ENCODE measurements at regions of chr11 and their contacts with region 1.

Region 1: GRCh38 chr11:72430741-72431570 is 3.4 kb downstream of the CLPB start:
- H3K4me3 ChIP-seq: no peak overlapping the region
- H3K27ac ChIP-seq: no peak overlapping the region
- H3K4me1 ChIP-seq: no peaks in the 10 kb centered on the region
- CTCF ChIP-seq: peak; percentile 67; the same call in 1 of the 2 replicates

Region 2: DNA sequence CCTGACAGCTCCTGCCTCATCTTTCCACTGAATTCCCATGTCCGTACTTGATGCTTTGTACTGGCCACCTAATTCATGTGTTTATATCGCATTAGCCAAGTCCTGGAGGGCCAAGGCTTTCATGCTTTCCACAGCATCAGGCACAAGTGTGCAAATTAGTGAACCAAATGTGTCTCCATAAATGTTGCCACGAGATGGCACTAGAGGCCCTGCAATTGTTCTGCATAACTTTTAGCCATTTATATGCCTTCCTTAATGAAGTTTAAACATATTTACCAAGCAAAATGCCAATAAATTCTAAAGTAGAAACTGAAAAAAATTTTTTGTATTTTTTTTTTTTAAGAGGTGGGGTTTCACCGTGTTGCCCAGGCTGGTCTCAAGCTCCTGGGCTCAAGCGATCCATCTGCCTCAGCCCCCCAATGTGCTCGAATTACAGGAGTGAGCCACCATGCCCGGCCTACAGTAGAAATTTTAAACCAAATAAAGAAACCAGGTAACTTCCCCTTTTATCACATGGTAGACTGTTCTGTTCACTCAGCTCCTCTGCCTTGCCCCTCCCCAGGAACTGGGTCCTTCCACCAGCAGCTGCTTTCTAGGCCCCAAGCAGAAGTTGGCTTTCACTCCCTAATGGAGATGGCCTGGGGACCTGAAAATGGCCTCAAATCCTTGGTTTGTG is 453.1 kb before region 1 on chr11:
- CTCF ChIA-PET with region 1: interaction called, 31 read pairs
- POLR2A ChIA-PET with region 1: no interaction called
- H3K4me3 ChIP-seq: no peak overlapping the region
- H3K27ac ChIP-seq: no peak overlapping the region
- H3K4me1 ChIP-seq: no peaks in the 10 kb centered on the region
- CTCF ChIP-seq: 0 out of 2 replicates have a peak, but pooled peaks have one; percentile 33

Region 3: GRCh38 chr11:72091005-72091691 is 339.8 kb before region 1 on chr11:
- CTCF ChIA-PET with region 1: interaction called, 15 read pairs
- POLR2A ChIA-PET with region 1: no interaction called
- H3K4me3 ChIP-seq: no peak overlapping the region
- H3K27ac ChIP-seq: no peak overlapping the region
- H3K4me1 ChIP-seq: no peaks in the 10 kb centered on the region
- CTCF ChIP-seq: peak; percentile 85

Region 4: DNA sequence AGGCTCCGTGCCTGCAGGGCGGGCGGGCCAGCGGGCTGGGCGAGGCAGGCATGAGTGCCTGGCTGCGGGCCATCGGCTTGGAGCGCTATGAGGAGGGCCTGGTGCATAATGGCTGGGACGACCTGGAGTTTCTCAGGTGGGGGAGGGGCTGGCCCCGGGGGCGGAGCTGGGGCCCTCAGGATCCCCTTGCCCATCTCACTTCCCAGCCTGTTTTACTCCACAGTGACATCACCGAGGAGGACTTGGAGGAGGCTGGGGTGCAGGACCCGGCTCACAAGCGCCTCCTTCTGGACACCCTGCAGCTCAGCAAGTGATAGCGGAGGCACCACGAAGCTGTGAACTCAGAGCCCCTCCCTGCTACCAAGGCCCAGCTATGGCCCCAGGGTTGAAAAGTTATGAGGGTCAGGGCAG is 192.9 kb before region 1 on chr11:
- CTCF ChIA-PET with region 1: interaction called, 19 read pairs
- POLR2A ChIA-PET with region 1: interaction called, 3 read pairs
- H3K4me3 ChIP-seq: no peak overlapping the region
- H3K27ac ChIP-seq: no peak overlapping the region
- H3K4me1 ChIP-seq: no peaks in the 10 kb centered on the region
- CTCF ChIP-seq: peak; percentile 30; the same call in 1 of the 2 replicates

Region 5: GRCh38 chr11:72308226-72309073 is 122.5 kb before region 1 on chr11:
- CTCF ChIA-PET with region 1: interaction called, 10 read pairs
- POLR2A ChIA-PET with region 1: no interaction called
- H3K4me3 ChIP-seq: no peak overlapping the region
- H3K27ac ChIP-seq: peak overlapping the region; percentile 32; the same call in 1 of the 2 replicates
- H3K4me1 ChIP-seq: peaks cover 11% of the 10 kb centered on the region
- CTCF ChIP-seq: no peak

Region 6: DNA sequence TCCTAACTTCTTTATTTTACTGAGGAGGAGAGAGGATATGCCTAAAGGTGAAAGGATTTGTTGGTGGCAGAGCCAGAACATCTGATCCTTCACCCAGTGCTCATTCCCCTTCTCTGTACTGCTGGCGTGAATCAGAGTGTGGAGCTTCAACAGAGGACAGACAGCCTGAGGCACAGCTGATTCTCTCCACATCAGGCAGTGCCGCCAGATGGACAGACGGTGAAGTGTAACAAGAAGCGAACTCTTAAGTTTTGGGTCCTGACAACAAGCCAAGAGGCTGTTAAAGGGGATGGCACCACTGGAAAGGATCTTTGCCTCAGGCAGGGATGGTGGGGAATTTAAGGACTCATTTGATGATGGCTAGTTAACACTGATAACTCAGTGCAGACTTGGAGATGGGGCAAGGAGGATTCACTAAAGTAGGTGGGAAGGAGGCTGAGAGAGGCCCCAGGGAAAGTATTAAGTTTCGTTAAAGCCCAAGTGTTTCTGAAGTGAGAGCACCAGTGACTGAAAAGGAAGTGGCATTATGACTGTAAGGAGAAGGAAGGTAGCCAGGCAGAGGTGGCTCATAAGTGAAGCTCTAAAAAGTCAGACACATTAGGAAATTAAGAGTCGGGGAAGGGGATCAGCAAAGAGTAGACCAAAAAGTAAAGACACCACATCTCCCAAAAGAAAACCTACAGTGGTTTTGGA is 78.0 kb before region 1 on chr11:
- CTCF ChIA-PET with region 1: interaction called, 24 read pairs
- POLR2A ChIA-PET with region 1: interaction called, 3 read pairs
- H3K4me3 ChIP-seq: no peak overlapping the region
- H3K27ac ChIP-seq: no peak overlapping the region
- H3K4me1 ChIP-seq: peaks cover 3% of the 10 kb centered on the region; the same call in 1 of the 2 replicates
- CTCF ChIP-seq: peak; percentile 38; the same call in 1 of the 2 replicates

Region 7: DNA sequence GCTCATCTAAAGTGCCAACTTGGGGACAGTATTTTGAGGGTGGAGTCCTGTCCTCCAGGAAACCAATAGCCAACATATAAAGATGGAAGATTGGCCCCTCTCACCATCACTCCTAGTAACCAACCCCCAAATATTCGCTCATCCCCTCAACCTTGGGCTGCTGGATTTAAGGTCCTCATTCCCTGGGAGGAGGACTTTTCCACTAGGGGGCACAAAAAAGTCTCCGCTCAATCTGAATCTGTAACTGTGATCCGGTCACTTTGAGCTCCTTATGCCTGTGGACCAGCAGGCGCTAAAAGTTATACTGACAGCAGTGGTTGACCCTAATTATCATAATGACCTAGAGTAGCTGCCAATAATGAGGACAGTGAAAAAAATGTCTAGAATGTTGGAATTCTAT is 23.8 kb after region 1 on chr11:
- CTCF ChIA-PET with region 1: interaction called, 11 read pairs
- POLR2A ChIA-PET with region 1: no interaction called
- H3K4me3 ChIP-seq: no peak overlapping the region
- H3K27ac ChIP-seq: no peak overlapping the region
- H3K4me1 ChIP-seq: no peaks in the 10 kb centered on the region
- CTCF ChIP-seq: no peak